Testis (tissue), 5 donors: ENCODE measurements at regions of chr16 and their contacts with region 1.

Region 1: GRCh38 chr16:6643080-6643686 is 689.5 kb upstream of the RBFOX1 start:
- DNase-seq: peak; percentile 78
- H3K4me3 ChIP-seq: no peak overlapping the region
- H3K27ac ChIP-seq: no peak overlapping the region
- H3K4me1 ChIP-seq: no peaks in the 10 kb centered on the region
- H3K27me3 ChIP-seq: no peaks in the 10 kb centered on the region
- CTCF ChIP-seq: peak; percentile 76 to 98 (median 89)
- POLR2A ChIP-seq: no peak

Region 2: GRCh38 chr16:5234295-5235050 is 1408.7 kb before region 1 on chr16:
- intact Hi-C with region 1: loop called (anchors 10 kb)
- DNase-seq: no peak
- H3K4me3 ChIP-seq: no peak overlapping the region
- H3K27ac ChIP-seq: no peak overlapping the region
- H3K4me1 ChIP-seq: no peaks in the 10 kb centered on the region
- H3K27me3 ChIP-seq: no peaks in the 10 kb centered on the region
- CTCF ChIP-seq: no peak
- POLR2A ChIP-seq: no peak

Region 3: DNA sequence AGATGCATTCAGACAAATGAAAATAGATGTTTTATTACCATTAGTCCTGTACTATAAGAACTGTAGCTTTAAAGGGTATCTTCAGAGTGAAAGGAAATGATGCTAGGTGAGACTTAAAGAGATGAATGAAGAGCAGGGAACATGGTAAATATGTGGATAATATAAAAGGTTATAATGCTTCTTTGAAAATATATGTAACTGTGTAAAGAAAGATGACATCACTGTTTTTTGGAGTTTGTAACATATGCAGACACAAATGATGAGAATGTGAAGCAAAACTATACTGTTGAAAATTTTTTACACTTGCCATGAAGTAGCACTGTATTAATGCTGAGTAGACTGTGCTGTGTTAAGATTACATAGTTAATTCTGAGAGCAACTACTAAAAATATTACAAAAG is 245.7 kb before region 1 on chr16:
- intact Hi-C with region 1: no loop called
- DNase-seq: no peak
- H3K4me3 ChIP-seq: no peak overlapping the region
- H3K27ac ChIP-seq: no peak overlapping the region
- H3K4me1 ChIP-seq: no peaks in the 10 kb centered on the region
- H3K27me3 ChIP-seq: no peaks in the 10 kb centered on the region
- CTCF ChIP-seq: no peak
- POLR2A ChIP-seq: no peak